ENCODE measurements at regions of chr1 and their contacts with region 1.

Region 1: GRCh38 chr1:24201941-24202440 is 14.9 kb upstream of the IFNLR1 start:
- DNase-seq: peak; percentile 56 to 93
- H3K4me3 ChIP-seq: no peak overlapping the region
- H3K27ac ChIP-seq: no peak overlapping the region
- H3K4me1 ChIP-seq: peaks cover 0 to 4% (median 2%) of the 10 kb centered on the region in 4 experiments; a peak in 2 of 7 replicates
- H3K27me3 ChIP-seq: no peaks in the 10 kb centered on the region
- CTCF ChIP-seq: peak; percentile 66 to 91 (median 83)
- EP300 ChIP-seq: no peak
- POLR2A ChIP-seq: no peak
- RAD21 ChIP-seq: peak; percentile 94 to 95

Region 2: DNA sequence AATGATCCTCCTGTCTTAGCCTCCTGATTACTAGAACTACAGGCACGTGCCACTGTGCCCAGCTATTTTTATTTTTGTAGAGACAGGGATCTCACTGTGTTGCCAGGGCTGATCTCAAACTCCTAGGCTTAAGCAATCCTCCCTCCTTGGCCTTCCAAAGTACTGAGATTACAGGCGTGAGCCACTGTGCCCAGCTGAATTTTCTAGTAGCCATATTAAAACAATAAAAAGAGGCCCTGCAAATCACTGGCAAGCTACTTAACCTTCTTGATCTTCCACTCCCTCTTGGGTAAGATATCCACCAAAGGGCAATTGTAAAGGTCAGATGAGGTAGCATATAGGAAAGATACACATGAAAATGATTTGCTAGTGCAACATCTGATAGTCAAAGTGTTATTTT is 156.2 kb before region 1 on chr1:
- CTCF ChIA-PET with region 1: no interaction called
- POLR2A ChIA-PET with region 1: no interaction called
- DNase-seq: no peak
- H3K4me3 ChIP-seq: no peak overlapping the region
- H3K27ac ChIP-seq: no peak overlapping the region
- H3K4me1 ChIP-seq: no peaks in the 10 kb centered on the region; a peak in 1 of 7 replicates
- H3K27me3 ChIP-seq: no peaks in the 10 kb centered on the region
- CTCF ChIP-seq: no peak
- EP300 ChIP-seq: no peak
- POLR2A ChIP-seq: no peak
- RAD21 ChIP-seq: no peak

Region 3: DNA sequence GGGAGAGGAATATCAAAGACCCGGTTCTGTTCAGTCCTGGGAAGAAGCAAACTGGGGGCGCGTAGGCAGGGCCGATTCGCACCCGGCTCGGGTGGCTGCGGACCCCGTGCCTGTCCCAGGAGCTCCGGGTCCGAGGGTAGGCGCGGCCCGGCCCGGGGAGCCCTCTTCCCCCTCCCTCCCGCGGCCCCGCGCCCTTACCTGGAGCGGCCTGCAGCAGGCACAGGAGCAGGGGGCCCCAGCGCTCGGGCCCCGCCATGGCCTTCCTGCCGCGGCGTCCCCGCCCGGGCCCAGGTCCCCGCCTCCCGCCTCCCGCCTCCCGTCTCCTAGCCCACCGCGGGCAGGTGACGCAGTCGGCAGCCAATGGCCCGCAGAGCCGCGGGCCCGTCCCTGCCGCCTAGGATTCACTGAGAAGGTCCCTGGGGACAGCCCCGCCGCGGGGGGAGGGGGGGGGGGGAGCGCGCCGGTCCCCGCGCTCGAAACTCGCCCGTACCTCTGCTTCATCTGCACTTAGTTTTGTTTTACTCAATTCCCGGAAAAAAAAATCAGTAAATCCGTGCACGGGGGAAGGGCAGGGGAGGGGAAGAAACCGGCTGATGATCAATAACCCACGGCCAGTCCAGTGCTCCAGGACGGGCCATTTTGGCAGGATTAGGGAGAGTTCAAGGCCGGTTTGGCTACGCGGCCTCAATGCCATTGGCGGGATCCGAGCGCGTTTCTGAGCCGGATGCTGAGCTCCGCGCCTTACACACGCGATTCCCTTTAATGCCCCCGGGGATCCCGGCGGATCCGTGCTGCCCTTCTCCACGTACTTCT is 14.8 kb before region 1 on chr1 and contains the start of gene IFNLR1:
- CTCF ChIA-PET with region 1: interaction called, 108 read pairs
- POLR2A ChIA-PET with region 1: interaction called, 7 read pairs
- DNase-seq: peak; percentile 46 to 77
- H3K4me3 ChIP-seq: peak within 1 kb of the TSS; percentile 57 to 79 (median 74)
- H3K27ac ChIP-seq: no peak within 1 kb of the TSS
- H3K4me1 ChIP-seq: peaks cover 0 to 3% (median 3%) of the 10 kb centered on the region in 4 experiments; a peak in 2 of 7 replicates
- H3K27me3 ChIP-seq: no peaks in the 10 kb centered on the region; a peak in 1 of 7 replicates
- CTCF ChIP-seq: no peak
- EP300 ChIP-seq: no peak
- POLR2A ChIP-seq: no peak; a peak in 1 of 3 replicates
- RAD21 ChIP-seq: no peak
- total RNA-seq, gene IFNLR1: 9.2 and 10.1 TPM in 2 replicates

Region 4: GRCh38 chr1:24253569-24253968 is 51.6 kb after region 1 on chr1:
- CTCF ChIA-PET with region 1: interaction called, 11 read pairs
- POLR2A ChIA-PET with region 1: no interaction called
- DNase-seq: peak in 1 of 2 experiments; percentile 51
- H3K4me3 ChIP-seq: no peak overlapping the region
- H3K27ac ChIP-seq: no peak overlapping the region
- H3K4me1 ChIP-seq: no peaks in the 10 kb centered on the region; a peak in 1 of 7 replicates
- H3K27me3 ChIP-seq: no peaks in the 10 kb centered on the region
- CTCF ChIP-seq: peak; percentile 47 to 67 (median 57)
- EP300 ChIP-seq: no peak
- POLR2A ChIP-seq: no peak
- RAD21 ChIP-seq: peak; percentile 46 to 62

Region 5: GRCh38 chr1:24301785-24302175 is 99.8 kb after region 1 on chr1:
- CTCF ChIA-PET with region 1: interaction called, 56 read pairs
- POLR2A ChIA-PET with region 1: no interaction called
- DNase-seq: no peak
- H3K4me3 ChIP-seq: no peak overlapping the region
- H3K27ac ChIP-seq: no peak overlapping the region
- H3K4me1 ChIP-seq: peaks cover 0 to 10% (median 5%) of the 10 kb centered on the region in 4 experiments; a peak in 3 of 7 replicates
- H3K27me3 ChIP-seq: no peaks in the 10 kb centered on the region
- CTCF ChIP-seq: no peak
- EP300 ChIP-seq: no peak
- POLR2A ChIP-seq: no peak
- RAD21 ChIP-seq: no peak

Region 6: GRCh38 chr1:24351918-24352627 is 150.1 kb after region 1 on chr1:
- CTCF ChIA-PET with region 1: interaction called, 27 read pairs
- POLR2A ChIA-PET with region 1: no interaction called
- DNase-seq: no peak
- H3K4me3 ChIP-seq: no peak overlapping the region
- H3K27ac ChIP-seq: no peak overlapping the region
- H3K4me1 ChIP-seq: no peaks in the 10 kb centered on the region
- H3K27me3 ChIP-seq: 0 out of 7 replicates have a peak, but pooled peaks cover 0 to 2% (median 0%) of the 10 kb centered on the region in 4 experiments
- CTCF ChIP-seq: no peak
- EP300 ChIP-seq: no peak
- POLR2A ChIP-seq: no peak
- RAD21 ChIP-seq: no peak

Region 7: DNA sequence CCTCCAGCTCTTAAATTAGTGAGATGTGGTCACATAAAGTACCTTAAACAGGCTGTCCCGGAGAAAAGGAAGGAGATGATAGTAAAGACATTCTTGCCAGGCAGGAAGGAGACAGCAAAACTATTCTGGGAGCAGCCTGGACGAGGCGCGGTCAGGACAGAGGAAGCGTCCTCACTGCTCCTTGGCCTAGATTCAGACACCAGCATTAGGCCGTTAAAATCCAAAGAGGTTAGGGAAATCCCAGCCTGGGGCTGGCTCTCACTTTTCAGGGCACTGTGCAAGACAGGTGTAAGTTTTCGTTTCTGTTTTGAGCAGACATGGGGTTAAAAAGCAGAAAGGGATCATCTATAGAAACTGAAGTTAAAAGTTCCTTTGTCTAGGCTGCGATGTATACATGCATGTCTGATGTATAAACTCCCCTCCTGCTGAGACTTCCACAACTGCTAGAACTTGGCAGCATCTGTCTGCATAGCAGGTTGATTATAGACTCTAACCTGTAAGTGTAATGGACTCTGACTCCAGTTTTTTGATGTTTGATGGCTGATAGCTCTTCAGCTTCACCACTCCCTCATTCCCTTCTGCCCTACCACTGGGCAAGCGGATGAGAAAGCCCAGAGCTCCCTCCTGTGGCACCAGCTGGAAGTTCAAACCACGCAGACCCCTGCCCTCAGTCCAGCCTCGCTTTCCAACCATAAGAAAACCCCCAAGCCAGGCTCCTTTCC is 190.1 kb after region 1 on chr1:
- CTCF ChIA-PET with region 1: interaction called, 465 read pairs
- POLR2A ChIA-PET with region 1: interaction called, 3 read pairs
- DNase-seq: peak; percentile 70 to 88
- H3K4me3 ChIP-seq: no peak overlapping the region
- H3K27ac ChIP-seq: no peak overlapping the region
- H3K4me1 ChIP-seq: peaks cover 0 to 2% (median 0%) of the 10 kb centered on the region in 4 experiments; a peak in 4 of 7 replicates
- H3K27me3 ChIP-seq: no peaks in the 10 kb centered on the region
- CTCF ChIP-seq: peak; percentile 90 to 92 (median 92)
- EP300 ChIP-seq: no peak
- POLR2A ChIP-seq: no peak
- RAD21 ChIP-seq: peak; percentile 92 to 97

Measured in H1 (cell line).